ENCODE measurements at regions of chr13 and their contacts with region 1.

Region 1: GRCh38 chr13:101942038-101942437 is 459.8 kb downstream of the FGF14 start:
- DNase-seq: peak; percentile 19
- H3K4me3 ChIP-seq: no peak overlapping the region
- H3K27ac ChIP-seq: no peak overlapping the region
- H3K4me1 ChIP-seq: no peaks in the 10 kb centered on the region
- H3K27me3 ChIP-seq: no peaks in the 10 kb centered on the region
- CTCF ChIP-seq: peak; percentile 69 to 90 (median 76)
- EP300 ChIP-seq: no peak
- POLR2A ChIP-seq: no peak

Region 2: DNA sequence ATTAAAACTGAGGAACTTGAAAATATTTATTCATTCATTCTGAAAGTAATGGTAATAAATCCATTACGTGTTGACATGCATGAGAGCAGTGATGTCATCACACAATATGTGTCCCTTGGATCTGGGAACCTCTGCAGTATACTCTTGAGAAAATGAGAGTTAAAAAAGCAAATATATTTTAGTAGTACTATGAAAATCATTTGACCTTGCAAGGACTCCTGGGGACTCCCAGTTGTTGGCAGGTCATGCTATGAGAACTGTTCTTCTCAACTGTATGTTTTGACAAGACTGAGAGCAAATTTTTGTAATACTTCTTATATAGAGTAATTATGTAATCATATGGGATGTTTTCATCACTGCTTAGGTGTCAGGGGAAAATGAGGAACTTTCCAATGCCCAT is 1603.8 kb before region 1 on chr13:
- in situ Hi-C with region 1: no loop called
- intact Hi-C with region 1: no loop called
- DNase-seq: no peak
- H3K4me3 ChIP-seq: no peak overlapping the region
- H3K27ac ChIP-seq: no peak overlapping the region
- H3K4me1 ChIP-seq: no peaks in the 10 kb centered on the region
- H3K27me3 ChIP-seq: no peaks in the 10 kb centered on the region
- CTCF ChIP-seq: no peak
- EP300 ChIP-seq: no peak
- POLR2A ChIP-seq: no peak

Region 3: DNA sequence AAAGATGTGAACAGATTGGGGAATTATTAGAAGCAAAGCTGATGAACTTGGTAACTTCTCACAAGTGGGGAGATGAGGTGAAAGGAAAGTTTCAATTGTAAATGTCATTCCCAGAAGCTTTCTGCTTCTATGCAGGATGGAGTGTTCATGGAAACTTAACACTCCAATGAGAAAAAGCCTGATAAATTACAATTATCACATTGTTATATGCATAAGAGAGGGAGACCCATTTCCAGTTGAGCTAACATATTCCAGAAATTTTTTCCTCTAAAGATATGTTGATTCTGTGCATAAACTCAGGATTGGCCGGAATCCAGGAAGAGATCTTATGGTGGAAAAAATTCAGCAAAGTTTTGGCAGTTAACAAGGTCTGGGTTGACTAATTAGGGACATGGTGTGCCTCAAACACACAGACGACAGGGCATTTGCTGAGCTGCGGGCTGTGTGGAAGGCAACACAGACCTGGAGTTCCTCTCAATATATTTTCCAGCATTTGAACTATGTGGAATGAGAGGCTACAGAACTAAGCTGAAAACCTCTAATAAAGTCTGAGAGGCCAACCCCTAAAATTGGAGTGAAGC is 524.7 kb after region 1 on chr13:
- in situ Hi-C with region 1: loop called in 3 of 4 experiments (anchors 25 kb)
- intact Hi-C with region 1: no loop called
- DNase-seq: no peak
- H3K4me3 ChIP-seq: no peak overlapping the region
- H3K27ac ChIP-seq: peak overlapping the region in 2 of 4 donors; percentile 8 to 30
- H3K4me1 ChIP-seq: no peaks in the 10 kb centered on the region
- H3K27me3 ChIP-seq: no peaks in the 10 kb centered on the region
- CTCF ChIP-seq: no peak
- EP300 ChIP-seq: no peak
- POLR2A ChIP-seq: no peak

Region 4: GRCh38 chr13:102555917-102556553 is 614.0 kb after region 1 on chr13:
- in situ Hi-C with region 1: loop called in 3 of 4 experiments (anchors 25 kb)
- intact Hi-C with region 1: loop called (anchors 10 kb)
- DNase-seq: no peak
- H3K4me3 ChIP-seq: no peak overlapping the region
- H3K27ac ChIP-seq: no peak overlapping the region
- H3K4me1 ChIP-seq: no peaks in the 10 kb centered on the region
- H3K27me3 ChIP-seq: no peaks in the 10 kb centered on the region
- CTCF ChIP-seq: peak in 4 of 5 experiments; percentile 22 to 39 (median 30)
- EP300 ChIP-seq: no peak
- POLR2A ChIP-seq: no peak

Measured in transverse colon (tissue), 4 donors.